Aorta (tissue), 5 donors: ENCODE measurements at regions of chr1 and their contacts with region 1.

Region 1: GRCh38 chr1:152623203-152623844 is 421 bp upstream of the LCE3A start:
- DNase-seq: no peak
- ATAC-seq: no peak
- H3K4me3 ChIP-seq: no peak overlapping the region
- H3K27ac ChIP-seq: no peak overlapping the region
- H3K4me1 ChIP-seq: no peaks in the 10 kb centered on the region
- H3K27me3 ChIP-seq: no peaks in the 10 kb centered on the region

Region 2: DNA sequence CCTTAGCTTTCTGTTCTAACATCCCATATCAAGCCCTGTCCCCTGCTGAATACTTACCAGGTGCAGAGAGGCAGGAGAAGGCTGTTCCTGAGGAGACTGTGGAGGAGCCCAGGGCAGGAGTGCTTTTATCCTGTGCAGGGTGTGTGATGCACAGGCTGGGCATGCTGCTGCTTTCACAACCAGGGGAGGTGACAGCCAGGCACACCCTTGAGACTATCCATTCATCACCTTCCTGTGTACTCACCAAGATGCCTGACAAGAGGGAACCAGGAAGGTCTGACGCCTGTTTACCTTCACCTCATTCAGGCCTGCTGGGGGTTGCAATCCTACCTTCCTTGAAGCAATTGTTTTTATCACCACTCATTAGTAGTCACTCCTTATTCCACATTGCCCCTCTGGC is 56.6 kb before region 1 on chr1 and contains the start of gene LCE3E:
- intact Hi-C with region 1: loop called in 1 of 2 experiments (anchors 10 kb)
- DNase-seq: no peak
- ATAC-seq: no peak
- H3K4me3 ChIP-seq: no peak within 1 kb of the TSS
- H3K27ac ChIP-seq: no peak within 1 kb of the TSS
- H3K4me1 ChIP-seq: no peaks in the 10 kb centered on the region
- H3K27me3 ChIP-seq: no peaks in the 10 kb centered on the region
- total RNA-seq, gene LCE3E: not detected